Dendritic cell treated with granulocyte-macrophage colony-stimulating factor and Interleukin-4, amounts not matched to agents 40 ng/mL and 50 ng/mL, for 4 days (primary cell): ENCODE measurements at regions of chr6 and their contacts with region 1.

Region 1: DNA sequence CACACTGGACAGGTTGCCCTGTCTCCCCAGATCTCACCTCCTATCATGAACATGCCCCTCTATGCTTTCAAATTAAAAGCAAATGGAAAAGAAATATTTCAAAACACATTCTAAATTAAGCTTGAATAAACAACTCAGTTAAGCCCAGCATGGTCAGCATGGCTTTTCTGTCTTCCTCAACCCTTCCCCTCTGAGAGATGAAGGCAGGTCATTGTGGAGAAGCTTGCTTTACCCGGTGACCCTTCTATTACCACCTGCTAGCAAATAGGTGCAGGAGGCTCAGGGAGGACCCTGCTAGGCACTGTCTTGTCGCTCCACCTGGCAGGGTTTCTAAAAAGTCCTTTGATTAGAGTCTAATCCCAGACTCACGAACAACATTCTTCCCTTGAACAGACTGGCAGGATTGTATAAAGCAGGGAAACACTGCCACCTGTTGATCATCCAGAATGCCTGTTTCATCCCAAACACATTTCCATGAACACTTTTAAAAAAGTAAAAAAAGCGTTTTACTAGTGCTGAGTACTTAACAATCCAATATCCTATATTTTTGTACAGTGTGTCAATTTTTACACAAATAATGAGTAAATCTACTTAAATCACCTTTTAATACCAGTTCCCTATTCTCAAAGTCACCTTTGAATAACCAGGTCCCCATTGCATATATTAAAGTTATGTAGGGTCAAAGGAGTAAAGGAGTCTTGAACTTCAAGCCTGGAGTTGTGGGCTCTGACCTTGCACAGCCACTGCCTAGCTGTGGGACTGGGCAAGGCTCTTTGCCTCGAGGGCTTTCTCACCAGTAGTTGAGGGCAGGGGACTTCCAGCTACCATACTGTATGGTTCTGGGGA is 75.5 kb downstream of the GPR6 start:
- H3K4me3 Mint-ChIP-seq: no peak overlapping the region
- H3K27ac Mint-ChIP-seq: no peak overlapping the region
- H3K4me1 Mint-ChIP-seq: peaks cover 5% of the 10 kb centered on the region
- H3K27me3 Mint-ChIP-seq: no peaks in the 10 kb centered on the region

Region 2: DNA sequence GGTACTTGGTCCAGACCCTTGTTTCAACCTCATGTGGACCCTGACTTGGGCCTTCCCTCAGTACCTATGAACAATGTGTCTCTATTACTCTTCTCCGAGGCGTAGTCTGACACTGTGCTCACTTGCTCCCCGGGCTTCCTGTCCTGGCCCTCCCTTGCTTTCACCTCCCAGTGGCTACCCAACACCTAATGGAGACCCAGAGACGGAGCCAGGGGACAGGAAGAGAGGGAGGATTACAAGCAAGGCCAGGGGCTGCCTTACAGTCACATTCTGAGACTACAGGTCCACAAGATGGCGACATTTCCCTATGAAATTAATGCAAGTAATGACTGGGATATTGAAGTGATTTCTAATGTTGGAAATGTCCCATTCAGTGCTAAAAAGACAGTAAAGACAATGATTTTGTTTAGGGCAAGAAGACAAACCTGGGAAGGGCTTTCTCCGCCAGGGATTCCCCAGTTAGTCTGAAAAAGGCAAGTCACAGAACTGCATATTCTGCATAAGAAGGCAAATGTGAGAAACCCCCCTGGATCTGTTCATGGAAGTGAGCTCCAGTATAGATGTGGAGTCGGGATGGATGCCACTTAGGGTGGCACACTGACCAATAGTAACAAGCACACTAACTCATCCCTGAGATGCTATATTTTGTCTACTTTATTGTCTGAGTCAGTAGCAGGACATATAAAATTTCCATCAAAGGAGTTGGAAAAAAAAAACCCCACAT is 526.6 kb before region 1 on chr6:
- intact Hi-C with region 1: loop called (anchors 2 kb)
- H3K4me3 Mint-ChIP-seq: no peak overlapping the region
- H3K27ac Mint-ChIP-seq: no peak overlapping the region
- H3K4me1 Mint-ChIP-seq: no peaks in the 10 kb centered on the region
- H3K27me3 Mint-ChIP-seq: no peaks in the 10 kb centered on the region

Region 3: DNA sequence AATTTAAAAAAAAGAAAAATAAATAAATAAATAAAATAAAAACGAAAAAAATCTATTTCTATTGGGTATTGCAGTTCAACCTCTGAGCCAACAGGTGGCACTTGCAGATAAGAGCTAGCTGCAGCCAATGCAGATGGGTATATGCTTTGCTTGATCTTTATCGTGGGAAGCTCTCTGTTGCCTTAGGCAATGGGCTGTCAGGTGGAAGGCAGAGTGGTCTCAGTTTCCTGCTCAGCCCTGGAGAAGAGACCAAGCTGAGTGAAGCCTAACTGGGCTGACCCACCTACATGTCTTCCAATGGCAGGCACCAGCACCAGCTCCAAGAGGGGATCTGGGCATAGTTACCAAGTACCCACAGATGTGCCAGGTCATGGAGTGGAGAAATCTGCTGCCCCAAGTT is 457.6 kb before region 1 on chr6:
- intact Hi-C with region 1: loop called (anchors 1 kb)
- H3K4me3 Mint-ChIP-seq: no peak overlapping the region
- H3K27ac Mint-ChIP-seq: no peak overlapping the region
- H3K4me1 Mint-ChIP-seq: no peaks in the 10 kb centered on the region
- H3K27me3 Mint-ChIP-seq: no peaks in the 10 kb centered on the region

Region 4: DNA sequence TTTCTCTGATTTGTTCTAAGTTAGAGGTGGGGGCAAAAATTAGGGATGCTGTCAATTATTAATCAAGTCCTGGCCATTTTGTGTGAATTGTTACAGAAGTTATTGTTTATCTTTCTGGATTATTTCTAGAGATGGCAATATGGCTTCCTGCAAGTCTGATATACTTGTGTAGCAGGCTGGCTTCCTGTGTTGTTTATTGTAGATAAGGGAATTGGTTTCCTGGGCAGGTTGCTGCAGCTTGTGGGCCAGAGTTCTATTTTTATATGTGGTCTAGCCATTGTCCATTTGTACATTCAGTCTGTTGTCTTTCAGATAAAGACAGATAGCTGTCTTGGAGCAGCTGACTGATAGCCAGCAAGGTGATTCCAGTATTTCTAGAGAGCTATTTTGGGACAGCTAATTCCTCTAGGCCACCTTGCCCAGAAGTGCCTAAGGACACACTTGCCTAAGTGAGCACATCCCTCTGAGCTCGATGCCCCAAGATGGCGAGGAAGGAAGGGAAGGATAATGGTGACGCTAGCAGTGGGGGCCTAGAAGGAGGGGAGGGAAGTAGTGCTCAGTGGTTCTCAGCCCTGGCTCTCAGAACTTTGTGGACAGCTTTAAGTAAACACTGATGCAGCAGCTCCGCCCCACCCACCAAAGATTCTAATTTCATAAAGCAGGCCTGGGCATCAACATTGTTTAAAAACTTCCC is 336.2 kb after region 1 on chr6:
- intact Hi-C with region 1: loop called (anchors 10 kb)
- H3K4me3 Mint-ChIP-seq: no peak overlapping the region
- H3K27ac Mint-ChIP-seq: no peak overlapping the region
- H3K4me1 Mint-ChIP-seq: no peaks in the 10 kb centered on the region
- H3K27me3 Mint-ChIP-seq: no peaks in the 10 kb centered on the region